Activated B cell treated with CpG ODN at 0.5 μM for 24 hours (primary cell): ENCODE measurements at regions of chr11 and their contacts with region 1.

Region 1: DNA sequence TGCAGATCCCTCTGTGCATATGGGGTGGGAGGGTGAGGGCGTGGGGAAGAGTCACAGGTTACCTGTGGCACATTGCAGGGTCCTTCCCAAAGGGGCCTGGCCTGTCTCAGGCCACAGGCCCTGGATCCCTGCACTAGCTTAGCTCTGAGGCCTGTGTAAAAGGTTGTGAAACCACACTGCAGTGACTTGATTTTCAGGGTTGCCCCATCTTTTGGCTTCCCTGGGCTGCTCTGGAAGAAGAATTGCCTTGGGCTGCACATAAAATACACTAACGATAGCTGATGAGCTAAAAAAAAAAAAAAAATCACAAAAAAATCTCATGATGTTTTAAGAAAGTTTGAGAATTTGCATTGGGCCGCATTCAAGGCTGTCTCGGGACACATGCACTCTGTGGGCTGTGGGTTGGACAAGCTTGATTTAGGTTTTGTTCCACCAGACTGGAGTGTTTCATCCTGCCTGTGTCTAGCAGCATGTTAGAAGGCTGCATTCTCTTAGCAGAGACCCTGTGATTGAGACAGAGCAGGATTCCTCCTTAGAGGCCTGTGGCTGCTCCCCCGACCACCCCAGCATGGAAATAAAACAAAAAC is 35.9 kb upstream of the TREH start:
- DNase-seq: no peak
- ATAC-seq: peak; percentile 21
- H3K4me3 Mint-ChIP-seq: no peak overlapping the region
- H3K27ac Mint-ChIP-seq: peak overlapping the region; percentile 4
- H3K4me1 Mint-ChIP-seq: peaks cover 11% of the 10 kb centered on the region
- H3K27me3 Mint-ChIP-seq: no peaks in the 10 kb centered on the region
- CTCF ChIP-seq: no peak

Region 2: DNA sequence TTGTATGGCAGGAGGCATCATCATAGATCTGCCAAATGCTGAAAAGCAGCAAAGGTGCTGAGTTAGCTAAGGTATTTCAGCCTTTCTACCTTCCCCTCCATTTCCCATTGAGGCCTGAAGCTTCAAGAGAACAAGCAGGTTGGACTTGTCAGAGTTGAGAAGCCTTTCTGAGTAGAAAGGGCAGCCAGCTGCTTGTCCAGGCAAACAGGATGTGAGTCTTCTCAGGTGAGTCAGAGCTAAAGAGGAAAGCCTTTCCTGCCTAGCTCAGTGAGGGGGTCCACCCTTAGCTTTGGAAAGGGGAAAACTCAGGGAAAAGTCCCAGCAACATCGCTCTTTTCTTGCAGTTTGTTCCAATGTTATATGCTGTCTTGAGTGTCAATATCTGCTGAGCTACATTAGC is 438.0 kb before region 1 on chr11:
- CTCF ChIA-PET with region 1: no interaction called
- POLR2A ChIA-PET with region 1: no interaction called
- intact Hi-C with region 1: no loop called
- DNase-seq: no peak
- ATAC-seq: no peak
- H3K4me3 Mint-ChIP-seq: no peak overlapping the region
- H3K27ac Mint-ChIP-seq: no peak overlapping the region
- H3K4me1 Mint-ChIP-seq: peaks cover 9% of the 10 kb centered on the region
- H3K27me3 Mint-ChIP-seq: peaks cover 11% of the 10 kb centered on the region
- CTCF ChIP-seq: no peak

Region 3: GRCh38 chr11:118699506-118700220 is 15.7 kb before region 1 on chr11:
- CTCF ChIA-PET with region 1: no interaction called
- POLR2A ChIA-PET with region 1: no interaction called
- intact Hi-C with region 1: loop called (anchors 2 kb)
- DNase-seq: no peak
- ATAC-seq: no peak
- H3K4me3 Mint-ChIP-seq: no peak overlapping the region
- H3K27ac Mint-ChIP-seq: peak overlapping the region; percentile 41
- H3K4me1 Mint-ChIP-seq: peaks cover 19% of the 10 kb centered on the region
- H3K27me3 Mint-ChIP-seq: no peaks in the 10 kb centered on the region
- CTCF ChIP-seq: no peak